H1 (cell line): ENCODE measurements at regions of chr3 and their contacts with region 1.

Region 1: GRCh38 chr3:65583188-65583587 is 455.5 kb downstream of the MAGI1 start:
- DNase-seq: no peak
- H3K4me3 ChIP-seq: no peak overlapping the region
- H3K27ac ChIP-seq: no peak overlapping the region
- H3K4me1 ChIP-seq: peaks cover under 1 to 20% (median 5%) of the 10 kb centered on the region in 4 experiments; a peak in 4 of 7 replicates
- H3K27me3 ChIP-seq: no peaks in the 10 kb centered on the region
- CTCF ChIP-seq: no peak
- EP300 ChIP-seq: no peak
- POLR2A ChIP-seq: no peak
- RAD21 ChIP-seq: no peak

Region 2: DNA sequence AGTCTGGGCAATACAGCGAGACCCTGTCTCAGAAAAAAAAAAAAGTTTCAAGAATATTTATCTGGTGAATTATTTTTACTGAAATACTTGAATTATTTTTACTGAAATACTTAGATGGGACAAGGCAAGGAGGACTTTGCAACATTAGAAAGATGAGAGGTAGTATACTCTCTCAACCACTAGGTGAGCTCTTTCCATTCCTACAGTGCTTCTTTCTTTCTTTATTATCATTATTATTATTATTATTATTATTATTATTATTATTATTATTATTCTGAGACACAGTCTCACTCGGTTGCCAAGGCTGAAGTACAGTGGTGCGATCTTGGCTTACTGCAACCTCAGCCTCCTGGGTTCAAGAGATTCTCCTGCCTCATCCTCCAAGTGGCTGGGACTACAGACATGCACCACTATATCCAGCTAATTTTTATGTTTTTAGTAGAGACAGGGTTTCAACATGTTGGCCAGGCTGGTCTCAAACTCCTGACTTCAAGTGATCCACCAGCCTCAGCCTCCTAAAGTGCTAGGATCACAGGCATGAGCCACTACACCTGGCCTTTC is 13.3 kb before region 1 on chr3:
- CTCF ChIA-PET with region 1: interaction called, 14 read pairs
- POLR2A ChIA-PET with region 1: interaction called, 5 read pairs
- DNase-seq: no peak
- H3K4me3 ChIP-seq: no peak overlapping the region
- H3K27ac ChIP-seq: no peak overlapping the region
- H3K4me1 ChIP-seq: no peaks in the 10 kb centered on the region
- H3K27me3 ChIP-seq: no peaks in the 10 kb centered on the region
- CTCF ChIP-seq: peak in 1 of 3 experiments; percentile 25; a peak in 1 of 4 replicates
- EP300 ChIP-seq: no peak
- POLR2A ChIP-seq: no peak
- RAD21 ChIP-seq: peak; percentile 28 to 32

Region 3: GRCh38 chr3:65604863-65605526 is 21.8 kb after region 1 on chr3:
- CTCF ChIA-PET with region 1: no interaction called
- POLR2A ChIA-PET with region 1: no interaction called
- DNase-seq: no peak
- H3K4me3 ChIP-seq: no peak overlapping the region
- H3K27ac ChIP-seq: no peak overlapping the region
- H3K4me1 ChIP-seq: peaks cover 2 to 4% (median 3%) of the 10 kb centered on the region in 4 experiments; a peak in 4 of 7 replicates
- H3K27me3 ChIP-seq: peaks cover 0 to 1% (median 0%) of the 10 kb centered on the region in 4 experiments; a peak in 1 of 7 replicates
- CTCF ChIP-seq: no peak
- EP300 ChIP-seq: no peak
- POLR2A ChIP-seq: no peak
- RAD21 ChIP-seq: no peak

Region 4: GRCh38 chr3:65720989-65721737 is 138.0 kb after region 1 on chr3:
- CTCF ChIA-PET with region 1: no interaction called
- POLR2A ChIA-PET with region 1: no interaction called
- DNase-seq: no peak
- H3K4me3 ChIP-seq: no peak overlapping the region
- H3K27ac ChIP-seq: no peak overlapping the region
- H3K4me1 ChIP-seq: peaks cover 0 to 24% (median 13%) of the 10 kb centered on the region in 4 experiments; a peak in 5 of 7 replicates
- H3K27me3 ChIP-seq: no peaks in the 10 kb centered on the region
- CTCF ChIP-seq: no peak
- EP300 ChIP-seq: no peak
- POLR2A ChIP-seq: no peak
- RAD21 ChIP-seq: no peak